ENCODE measurements at regions of chr3 and their contacts with region 1.

Region 1: DNA sequence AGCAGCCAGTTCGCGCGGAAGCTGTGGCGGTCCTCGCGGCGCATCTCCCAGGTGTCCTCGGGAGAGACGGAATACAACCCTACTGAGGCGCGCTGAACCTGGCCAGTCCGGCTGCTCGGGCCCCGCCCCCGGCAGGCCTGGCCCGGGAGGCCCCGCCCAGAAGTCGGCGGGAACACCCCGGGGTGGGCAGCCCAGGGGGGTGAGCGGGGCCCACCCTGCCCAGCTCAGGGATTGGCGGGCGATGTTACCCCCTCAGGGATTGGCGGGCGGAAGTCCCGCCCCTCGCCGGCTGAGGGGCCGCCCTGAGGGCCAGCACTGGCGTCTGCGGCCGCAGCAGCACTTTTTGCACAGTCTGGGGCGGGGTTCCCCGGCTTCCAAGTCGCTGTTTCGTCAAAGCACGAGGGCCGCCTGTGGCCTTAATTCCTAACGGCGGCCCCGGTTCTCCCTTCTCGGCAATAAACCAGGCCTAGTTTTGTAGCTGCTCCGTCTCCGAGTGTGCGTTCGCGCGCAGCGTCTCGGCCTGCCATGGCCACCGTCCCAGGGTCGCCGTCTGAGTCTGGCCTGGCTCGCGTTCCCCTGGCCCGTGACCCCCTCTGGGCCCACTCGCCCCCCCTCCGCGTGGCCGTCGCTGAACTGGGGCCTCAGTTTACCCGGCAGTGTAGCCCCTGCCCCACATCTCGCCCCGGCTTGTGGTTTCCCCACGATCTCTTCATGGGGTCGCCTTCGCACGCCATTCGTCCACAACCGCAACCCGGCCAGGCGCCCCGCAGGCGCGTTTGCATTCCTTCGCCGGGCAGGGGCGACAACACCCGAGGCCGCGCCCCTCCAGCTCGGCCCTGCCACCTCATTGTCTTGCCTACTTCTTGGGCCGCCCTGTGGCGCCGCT is 30.0 kb downstream of the NBEAL2 start:
- DNase-seq: peak; percentile 74 to 90
- ATAC-seq: peak; percentile 75 to 79
- H3K4me3 ChIP-seq: peak overlapping the region; percentile 55 to 71 (median 66)
- H3K27ac ChIP-seq: peak overlapping the region; percentile 85 to 88 (median 86)
- H3K4me1 ChIP-seq: peaks cover 4 to 18% of the 10 kb centered on the region in 2 donors
- H3K27me3 ChIP-seq: no peaks in the 10 kb centered on the region
- CTCF ChIP-seq: no peak
- POLR2A ChIP-seq: peak; percentile 86 to 89

Region 2: GRCh38 chr3:46612324-46612723 is 397.1 kb before region 1 on chr3 and contains the start of gene FAM240A:
- in situ Hi-C with region 1: no loop called
- intact Hi-C with region 1: no loop called
- DNase-seq: peak; percentile 25 to 36
- ATAC-seq: peak; percentile 71 to 84
- H3K4me3 ChIP-seq: no peak within 1 kb of the TSS
- H3K27ac ChIP-seq: peak within 1 kb of the TSS in 2 of 4 donors; percentile 34 to 36
- H3K4me1 ChIP-seq: peaks cover 4 to 10% of the 10 kb centered on the region in 2 donors
- H3K27me3 ChIP-seq: no peaks in the 10 kb centered on the region
- CTCF ChIP-seq: no peak
- POLR2A ChIP-seq: no peak
- total RNA-seq, gene FAM240A: 0.18 TPM in 1 of 4 donors, not detected in the others

Region 3: DNA sequence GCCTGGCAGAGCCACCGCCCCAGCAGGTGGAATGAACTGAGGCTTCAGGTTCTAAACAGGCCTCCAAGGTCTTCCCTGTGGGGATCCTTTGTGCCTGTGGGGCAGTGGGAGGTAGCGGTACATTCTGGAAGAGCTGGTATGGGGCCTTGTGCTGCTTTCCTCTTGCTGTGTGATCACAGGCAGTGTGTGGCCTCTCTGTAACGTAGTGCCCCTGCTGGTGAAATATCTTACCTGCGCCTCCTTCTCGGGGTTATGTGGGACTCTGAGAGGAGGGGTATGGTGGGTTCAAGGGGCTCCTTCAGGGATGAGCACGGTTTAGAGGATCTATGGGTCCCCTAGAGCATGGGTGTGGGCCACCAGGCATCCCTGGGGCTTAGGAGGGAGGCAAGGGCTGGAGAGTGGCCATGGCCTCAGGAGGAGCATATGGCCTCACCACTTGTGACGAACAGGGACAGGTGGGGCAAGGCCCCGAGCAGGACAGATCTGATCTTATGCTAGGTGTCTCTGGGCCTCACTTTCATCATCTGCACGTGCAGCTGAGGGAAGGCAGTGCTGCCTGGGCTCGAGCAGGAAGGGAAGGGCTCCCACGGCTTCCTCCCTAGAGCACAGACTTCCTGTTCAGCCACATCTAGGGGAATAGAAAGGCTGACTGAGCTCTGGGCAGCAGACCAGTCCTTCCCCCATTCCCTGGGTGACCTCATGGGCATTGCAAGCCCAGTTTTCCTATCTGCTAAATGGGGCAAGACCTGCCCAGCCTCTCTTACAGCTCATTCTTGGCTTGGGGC is 314.1 kb before region 1 on chr3:
- in situ Hi-C with region 1: loop called in 1 of 4 experiments (anchors 25 kb)
- intact Hi-C with region 1: no loop called
- DNase-seq: peak; percentile 72 to 83
- ATAC-seq: peak; percentile 29 to 33
- H3K4me3 ChIP-seq: no peak overlapping the region
- H3K27ac ChIP-seq: peak overlapping the region; percentile 93 to 97 (median 96)
- H3K4me1 ChIP-seq: peaks cover 62% of the 10 kb centered on the region in 2 donors
- H3K27me3 ChIP-seq: no peaks in the 10 kb centered on the region
- CTCF ChIP-seq: peak in 3 of 5 experiments; percentile 33 to 55 (median 38)
- POLR2A ChIP-seq: no peak

Region 4: GRCh38 chr3:47176582-47176981 is 167.1 kb after region 1 on chr3:
- in situ Hi-C with region 1: no loop called
- intact Hi-C with region 1: no loop called
- DNase-seq: no peak
- ATAC-seq: no peak
- H3K4me3 ChIP-seq: no peak overlapping the region
- H3K27ac ChIP-seq: no peak overlapping the region
- H3K4me1 ChIP-seq: no peaks in the 10 kb centered on the region
- H3K27me3 ChIP-seq: no peaks in the 10 kb centered on the region
- CTCF ChIP-seq: no peak
- POLR2A ChIP-seq: no peak

Region 5: GRCh38 chr3:47565734-47566550 is 556.5 kb after region 1 on chr3:
- in situ Hi-C with region 1: no loop called
- intact Hi-C with region 1: no loop called
- DNase-seq: no peak
- ATAC-seq: no peak
- H3K4me3 ChIP-seq: no peak overlapping the region
- H3K27ac ChIP-seq: no peak overlapping the region
- H3K4me1 ChIP-seq: no peaks in the 10 kb centered on the region
- H3K27me3 ChIP-seq: no peaks in the 10 kb centered on the region
- CTCF ChIP-seq: no peak
- POLR2A ChIP-seq: no peak

Region 6: DNA sequence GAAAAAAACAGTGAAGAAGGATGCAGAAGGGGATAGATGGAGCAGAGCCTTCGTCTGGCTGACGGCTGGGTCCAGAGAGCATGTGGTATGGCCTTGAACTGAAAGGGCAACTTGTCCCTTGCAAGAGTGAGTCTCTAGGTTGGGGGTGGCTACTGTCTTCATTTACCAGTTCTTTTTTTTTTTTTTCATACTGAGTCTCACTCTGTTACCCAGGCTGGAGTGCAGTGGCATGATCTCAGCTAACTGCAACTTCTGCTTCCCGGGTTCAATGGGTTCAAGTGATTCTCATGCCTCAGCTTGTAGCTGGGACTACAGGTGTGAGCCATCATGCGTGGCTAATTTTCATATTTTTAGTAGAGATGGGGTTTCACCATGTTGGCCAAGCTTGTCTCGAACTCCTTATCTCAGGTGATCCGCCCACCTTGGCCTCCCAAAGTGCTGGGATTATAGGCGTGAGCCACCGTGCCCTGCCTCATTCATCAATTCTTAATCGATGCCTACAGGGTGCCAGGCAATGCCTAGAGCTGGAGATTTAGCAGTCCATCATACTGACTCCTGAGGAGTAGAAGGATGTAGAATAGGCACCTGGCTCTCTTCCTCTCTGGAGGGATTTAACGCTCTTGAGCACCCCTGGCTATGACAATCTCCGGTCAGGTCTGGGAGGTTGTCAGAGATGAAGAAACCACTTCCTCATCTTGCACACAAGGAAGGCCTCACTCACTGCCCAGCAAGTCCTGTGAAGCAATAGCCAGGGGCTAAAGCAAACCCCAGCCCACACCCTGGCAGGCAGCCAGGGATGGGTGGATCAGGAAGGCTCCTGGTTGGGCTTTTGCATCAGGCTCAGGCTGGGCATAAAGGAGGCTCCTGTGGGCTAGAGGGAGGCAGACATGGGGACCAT is 1213.4 kb after region 1 on chr3 and contains the start of gene CAMP:
- in situ Hi-C with region 1: no loop called
- intact Hi-C with region 1: no loop called
- DNase-seq: peak in 1 of 2 donors; percentile 61
- ATAC-seq: peak in 1 of 2 donors; percentile 18
- H3K4me3 ChIP-seq: no peak within 1 kb of the TSS
- H3K27ac ChIP-seq: no peak within 1 kb of the TSS
- H3K4me1 ChIP-seq: no peaks in the 10 kb centered on the region
- H3K27me3 ChIP-seq: no peaks in the 10 kb centered on the region
- CTCF ChIP-seq: no peak
- POLR2A ChIP-seq: no peak
- total RNA-seq, gene CAMP: not detected